BJ (cell line): ENCODE measurements at regions of chr2 and their contacts with region 1.

Region 1: GRCh38 chr2:100730346-100730745 is 89.6 kb upstream of the NPAS2 start:
- DNase-seq: no peak
- H3K4me3 ChIP-seq: no peak overlapping the region
- H3K27me3 ChIP-seq: no peaks in the 10 kb centered on the region
- CTCF ChIP-seq: peak; percentile 81

Region 2: GRCh38 chr2:100742277-100743254 is 12.2 kb after region 1 on chr2:
- CTCF ChIA-PET with region 1: interaction called, 4 read pairs
- POLR2A ChIA-PET with region 1: interaction called, 16 read pairs
- DNase-seq: peak; percentile 99
- H3K4me3 ChIP-seq: no peak overlapping the region
- H3K27me3 ChIP-seq: no peaks in the 10 kb centered on the region
- CTCF ChIP-seq: 0 out of 2 replicates have a peak, but pooled peaks have one; percentile 1

Region 3: DNA sequence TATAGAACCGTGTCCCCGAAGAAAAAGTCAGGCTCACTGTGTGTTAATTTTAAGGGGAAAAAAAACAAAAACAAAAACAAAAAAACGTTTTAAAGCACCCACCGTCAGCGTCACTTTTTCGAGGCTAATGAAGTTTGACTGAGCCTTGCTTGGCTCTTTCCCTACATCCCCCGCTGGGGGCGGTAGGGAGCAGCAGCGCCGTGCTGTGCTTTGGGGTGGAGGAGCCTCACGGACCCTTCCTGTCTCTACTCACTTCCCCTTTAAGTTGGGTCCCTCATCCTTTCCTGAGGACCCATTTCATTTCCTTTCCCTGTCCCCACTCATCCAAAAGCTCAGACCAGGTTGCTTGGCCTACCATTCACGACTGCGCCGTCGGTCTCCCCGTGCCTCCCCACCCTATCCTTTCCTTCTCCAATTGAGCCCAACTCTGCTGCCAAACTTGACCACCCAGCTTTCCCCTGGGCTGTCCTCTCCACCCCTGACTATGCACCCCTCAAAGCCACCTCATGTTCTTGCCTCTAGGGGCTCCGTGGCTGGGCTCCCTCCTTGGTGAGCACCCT is 189.1 kb after region 1 on chr2:
- CTCF ChIA-PET with region 1: no interaction called
- POLR2A ChIA-PET with region 1: no interaction called
- DNase-seq: no peak
- H3K4me3 ChIP-seq: no peak overlapping the region
- H3K27me3 ChIP-seq: no peaks in the 10 kb centered on the region
- CTCF ChIP-seq: peak; percentile 34

Region 4: GRCh38 chr2:100964681-100965169 is 234.4 kb after region 1 on chr2:
- CTCF ChIA-PET with region 1: interaction called, 16 read pairs
- POLR2A ChIA-PET with region 1: no interaction called
- DNase-seq: no peak
- H3K4me3 ChIP-seq: no peak overlapping the region
- H3K27me3 ChIP-seq: no peaks in the 10 kb centered on the region
- CTCF ChIP-seq: no peak

Region 5: GRCh38 chr2:100978582-100979191 is 248.3 kb after region 1 on chr2:
- CTCF ChIA-PET with region 1: interaction called, 26 read pairs
- POLR2A ChIA-PET with region 1: no interaction called
- DNase-seq: no peak
- H3K4me3 ChIP-seq: no peak overlapping the region
- H3K27me3 ChIP-seq: no peaks in the 10 kb centered on the region; the same call in 1 of the 2 replicates
- CTCF ChIP-seq: no peak

Region 6: GRCh38 chr2:100984892-100985379 is 254.6 kb after region 1 on chr2:
- CTCF ChIA-PET with region 1: interaction called, 96 read pairs
- POLR2A ChIA-PET with region 1: no interaction called
- DNase-seq: no peak
- H3K4me3 ChIP-seq: no peak overlapping the region
- H3K27me3 ChIP-seq: no peaks in the 10 kb centered on the region; the same call in 1 of the 2 replicates
- CTCF ChIP-seq: peak; percentile 87

Region 7: GRCh38 chr2:101001691-101002561 is 271.6 kb after region 1 on chr2 and contains the start of gene RPL31:
- CTCF ChIA-PET with region 1: interaction called, 13 read pairs
- POLR2A ChIA-PET with region 1: interaction called, 3 read pairs
- DNase-seq: peak; percentile 75
- H3K4me3 ChIP-seq: peak within 1 kb of the TSS; percentile 77
- H3K27me3 ChIP-seq: no peaks in the 10 kb centered on the region
- CTCF ChIP-seq: no peak
- polyA plus RNA-seq, gene RPL31: 1,622 and 3,206 TPM in 2 replicates

Region 8: GRCh38 chr2:102652126-102652525 is 1921.8 kb after region 1 on chr2:
- CTCF ChIA-PET with region 1: no interaction called
- POLR2A ChIA-PET with region 1: no interaction called
- DNase-seq: no peak
- H3K4me3 ChIP-seq: no peak overlapping the region
- H3K27me3 ChIP-seq: no peaks in the 10 kb centered on the region
- CTCF ChIP-seq: no peak